ENCODE measurements at regions of chr9 and their contacts with region 1.

Region 1: DNA sequence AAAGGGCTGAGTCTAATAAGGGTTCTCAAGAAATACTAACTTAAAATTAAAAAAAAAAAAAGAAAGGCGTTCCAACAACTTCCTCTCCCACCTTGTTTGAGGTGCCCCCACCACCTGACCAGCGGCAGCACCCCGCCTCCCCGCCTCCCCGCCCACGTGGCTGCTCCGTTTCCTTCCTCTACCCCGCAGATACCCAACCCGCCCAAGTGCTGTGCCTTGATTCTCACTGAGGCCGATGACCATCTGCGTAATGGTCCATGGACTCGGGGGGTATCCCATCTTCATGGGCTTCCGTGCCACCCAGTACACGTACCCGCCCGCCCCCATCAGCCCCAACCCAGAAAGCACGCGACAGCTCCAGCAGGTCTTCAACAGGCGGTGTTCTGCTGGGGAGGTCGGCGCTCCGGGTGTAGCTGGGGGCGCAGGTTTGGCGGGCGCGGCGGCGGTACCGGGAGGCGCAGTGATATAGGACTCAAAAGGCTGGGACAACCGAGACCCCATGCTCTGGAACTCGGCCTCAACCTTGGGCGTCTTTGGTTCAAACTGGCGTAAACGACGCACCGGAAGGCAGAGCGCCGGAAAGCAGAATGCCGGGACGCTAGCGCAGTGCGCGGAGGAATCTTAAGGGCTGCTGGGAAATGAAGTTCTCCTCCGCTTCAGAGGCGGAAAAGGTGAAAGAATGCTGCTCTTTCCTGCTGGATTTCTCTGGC is at the start of gene DMAC1:
- DNase-seq: peak; percentile 85
- H3K4me3 Mint-ChIP-seq: peak within 1 kb of the TSS; percentile 86
- H3K27ac Mint-ChIP-seq: peak within 1 kb of the TSS; percentile 93
- H3K4me1 Mint-ChIP-seq: peaks cover 22% of the 10 kb centered on the region
- H3K27me3 Mint-ChIP-seq: no peaks in the 10 kb centered on the region
- total RNA-seq, gene DMAC1: 45.4 to 46.6 TPM

Region 2: DNA sequence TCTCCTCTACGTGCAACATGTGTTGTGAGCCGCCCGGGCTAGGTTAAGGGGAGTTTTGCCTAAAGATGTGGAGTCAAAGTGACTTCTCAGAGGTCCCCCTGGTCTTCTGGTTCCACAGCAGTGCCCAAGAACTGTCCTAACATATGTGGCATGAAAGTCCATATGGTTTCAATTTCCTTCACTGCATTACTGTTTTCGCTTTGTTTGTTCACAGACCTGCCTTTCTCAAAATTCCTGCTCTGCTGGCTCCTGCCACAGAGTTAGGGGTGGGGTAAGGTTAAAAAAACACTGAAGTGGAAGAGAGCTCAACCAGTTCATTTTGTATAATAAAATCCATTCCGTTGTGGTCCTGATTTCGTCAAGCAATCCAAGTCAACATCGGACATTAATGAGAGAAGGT is 289.2 kb before region 1 on chr9:
- CTCF ChIA-PET with region 1: no interaction called
- POLR2A ChIA-PET with region 1: no interaction called
- intact Hi-C with region 1: no loop called
- DNase-seq: no peak
- H3K4me3 Mint-ChIP-seq: no peak overlapping the region
- H3K27ac Mint-ChIP-seq: no peak overlapping the region
- H3K4me1 Mint-ChIP-seq: no peaks in the 10 kb centered on the region
- H3K27me3 Mint-ChIP-seq: peaks cover 1% of the 10 kb centered on the region

Region 3: DNA sequence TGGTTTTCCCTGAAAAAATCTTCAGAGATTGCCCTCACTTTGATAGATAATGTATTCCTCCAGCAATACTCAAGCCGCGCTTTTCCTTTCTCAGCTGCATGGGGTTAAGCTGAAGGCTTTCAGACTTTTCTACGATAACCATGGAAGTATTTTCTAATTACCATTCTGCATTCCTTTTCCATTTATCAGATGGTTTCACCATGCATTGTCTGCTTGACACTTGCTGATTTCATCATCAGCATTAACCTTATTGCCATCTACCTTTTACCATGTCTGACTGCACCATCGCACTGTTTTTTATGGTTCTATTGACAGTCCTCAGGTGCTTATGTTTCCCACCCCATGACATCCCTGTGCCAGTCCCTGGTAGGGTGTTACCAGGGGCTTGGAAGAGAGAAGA is 91.5 kb before region 1 on chr9:
- CTCF ChIA-PET with region 1: no interaction called
- POLR2A ChIA-PET with region 1: no interaction called
- intact Hi-C with region 1: no loop called
- DNase-seq: no peak
- H3K4me3 Mint-ChIP-seq: no peak overlapping the region
- H3K27ac Mint-ChIP-seq: no peak overlapping the region
- H3K4me1 Mint-ChIP-seq: no peaks in the 10 kb centered on the region
- H3K27me3 Mint-ChIP-seq: peaks cover 3% of the 10 kb centered on the region

Region 4: GRCh38 chr9:7756088-7756487 is 43.3 kb before region 1 on chr9:
- CTCF ChIA-PET with region 1: no interaction called
- POLR2A ChIA-PET with region 1: interaction called, 5 read pairs
- intact Hi-C with region 1: loop called (anchors 1 kb)
- DNase-seq: peak; percentile 15
- H3K4me3 Mint-ChIP-seq: no peak overlapping the region
- H3K27ac Mint-ChIP-seq: peak overlapping the region; percentile 50
- H3K4me1 Mint-ChIP-seq: peaks cover 12% of the 10 kb centered on the region
- H3K27me3 Mint-ChIP-seq: no peaks in the 10 kb centered on the region